ENCODE measurements at regions of chr12 and their contacts with region 1.

Region 1: GRCh38 chr12:53220801-53221202 is 11.2 kb downstream of the RARG start:
- DNase-seq: peak; percentile 92
- H3K4me3 Mint-ChIP-seq: peak overlapping the region; percentile 80
- H3K27ac Mint-ChIP-seq: peak overlapping the region; percentile 93
- H3K4me1 Mint-ChIP-seq: peaks cover 74% of the 10 kb centered on the region
- H3K27me3 Mint-ChIP-seq: no peaks in the 10 kb centered on the region

Region 2: GRCh38 chr12:53200458-53201176 is 20.2 kb before region 1 on chr12:
- CTCF ChIA-PET with region 1: interaction called, 3 read pairs
- POLR2A ChIA-PET with region 1: interaction called, 5 read pairs
- intact Hi-C with region 1: loop called (anchors 1 kb)
- DNase-seq: peak; percentile 77
- H3K4me3 Mint-ChIP-seq: peak overlapping the region; percentile 45
- H3K27ac Mint-ChIP-seq: peak overlapping the region; percentile 88
- H3K4me1 Mint-ChIP-seq: peaks cover 72% of the 10 kb centered on the region
- H3K27me3 Mint-ChIP-seq: no peaks in the 10 kb centered on the region

Region 3: DNA sequence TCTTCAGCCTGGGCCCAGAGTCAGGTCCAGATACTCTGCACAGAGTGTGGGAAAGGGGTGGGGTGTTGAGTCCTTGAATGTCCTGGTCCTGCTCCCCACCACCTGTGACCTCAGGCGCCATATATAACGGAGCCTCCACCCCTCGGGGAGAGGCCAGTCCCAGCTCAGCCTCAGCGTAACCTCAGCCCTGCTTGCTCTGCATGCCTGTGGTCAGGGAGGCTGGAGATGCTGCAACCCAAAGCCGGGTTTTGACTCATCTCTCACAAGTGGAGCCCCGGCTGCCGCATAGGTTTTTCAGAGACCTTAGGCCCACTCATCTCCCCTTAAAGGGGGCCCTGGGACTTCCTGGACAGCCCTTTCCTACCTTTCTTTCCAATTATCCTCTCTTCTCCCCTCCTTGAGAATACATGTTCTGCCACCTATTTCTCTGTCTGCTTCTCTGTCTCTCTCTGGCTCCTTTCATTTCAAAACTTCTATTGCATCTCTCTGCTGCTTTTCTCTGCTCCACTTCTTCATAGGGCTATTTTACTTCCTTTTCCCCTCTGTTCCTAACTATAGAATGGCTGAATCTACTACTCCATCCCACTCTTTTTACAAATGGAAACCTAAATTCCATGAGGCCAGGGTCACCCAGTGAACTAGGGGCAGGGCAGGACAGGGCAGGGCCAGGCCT is 14.9 kb before region 1 on chr12:
- CTCF ChIA-PET with region 1: interaction called, 11 read pairs
- POLR2A ChIA-PET with region 1: interaction called, 33 read pairs
- intact Hi-C with region 1: loop called (anchors 1 kb)
- DNase-seq: peak; percentile 92
- H3K4me3 Mint-ChIP-seq: peak overlapping the region; percentile 84
- H3K27ac Mint-ChIP-seq: peak overlapping the region; percentile 83
- H3K4me1 Mint-ChIP-seq: peaks cover 77% of the 10 kb centered on the region
- H3K27me3 Mint-ChIP-seq: no peaks in the 10 kb centered on the region

Region 4: GRCh38 chr12:53231826-53232645 is 11.2 kb after region 1 on chr12 and contains the start of gene RARG:
- CTCF ChIA-PET with region 1: interaction called, 6 read pairs
- POLR2A ChIA-PET with region 1: interaction called, 18 read pairs
- intact Hi-C with region 1: loop called (anchors 1 kb)
- DNase-seq: peak; percentile 81
- H3K4me3 Mint-ChIP-seq: peak within 1 kb of the TSS; percentile 86
- H3K27ac Mint-ChIP-seq: peak within 1 kb of the TSS; percentile 91
- H3K4me1 Mint-ChIP-seq: peaks cover 74% of the 10 kb centered on the region
- H3K27me3 Mint-ChIP-seq: no peaks in the 10 kb centered on the region
- total RNA-seq, gene RARG: 21.8 to 25.2 TPM

Region 5: DNA sequence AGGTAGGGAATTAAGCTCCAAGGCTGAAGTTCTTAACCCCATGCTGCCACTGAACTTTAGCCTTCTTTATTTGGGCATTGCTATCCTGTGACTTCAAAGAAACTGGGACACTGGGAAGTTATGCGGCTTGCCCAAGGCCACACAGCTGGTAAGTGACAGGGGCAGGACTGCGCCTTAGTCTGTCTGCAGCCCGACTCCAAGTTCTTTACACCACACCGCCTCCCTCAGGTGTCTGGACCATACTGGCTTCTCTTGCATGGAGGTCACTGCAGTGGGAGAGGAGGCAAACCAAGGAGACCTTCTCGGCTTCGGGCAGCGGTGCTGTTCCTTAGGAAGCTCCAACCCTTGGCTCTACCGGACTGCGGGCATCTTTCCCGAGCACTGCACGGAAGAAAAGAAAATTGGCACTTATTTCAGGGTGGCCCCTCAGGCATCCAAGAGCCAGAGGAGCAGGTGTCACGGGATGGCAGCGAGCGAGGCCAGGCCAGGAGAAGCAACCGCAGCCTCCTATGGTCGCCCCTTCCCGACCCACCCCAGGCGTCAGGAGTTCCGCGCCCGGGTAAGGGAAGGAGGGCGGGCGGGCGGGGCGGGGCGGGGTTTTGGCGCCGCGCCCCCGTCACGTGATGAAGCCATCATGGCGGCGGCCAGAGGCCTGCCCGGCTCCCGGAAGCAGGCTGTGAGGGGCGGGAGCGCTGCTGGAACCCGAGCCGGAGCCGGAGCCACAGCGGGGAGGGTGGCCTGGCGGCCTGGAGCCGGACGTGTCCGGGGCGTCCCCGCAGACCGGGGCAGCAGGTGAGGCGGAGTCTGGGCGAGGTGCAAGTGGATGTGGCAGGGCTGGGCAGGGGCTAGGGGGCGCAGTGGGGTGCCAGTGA is 30.9 kb after region 1 on chr12:
- CTCF ChIA-PET with region 1: interaction called, 164 read pairs
- POLR2A ChIA-PET with region 1: interaction called, 9 read pairs
- intact Hi-C with region 1: loop called (anchors 1 kb)
- DNase-seq: peak; percentile 79
- H3K4me3 Mint-ChIP-seq: peak overlapping the region; percentile 97
- H3K27ac Mint-ChIP-seq: peak overlapping the region; percentile 89
- H3K4me1 Mint-ChIP-seq: peaks cover 40% of the 10 kb centered on the region
- H3K27me3 Mint-ChIP-seq: no peaks in the 10 kb centered on the region

Region 6: GRCh38 chr12:53295070-53295890 is 74.5 kb after region 1 on chr12 and contains the start of gene PFDN5:
- CTCF ChIA-PET with region 1: interaction called, 172 read pairs
- POLR2A ChIA-PET with region 1: interaction called, 7 read pairs
- intact Hi-C with region 1: loop called (anchors 2 kb)
- DNase-seq: peak; percentile 92
- H3K4me3 Mint-ChIP-seq: peak within 1 kb of the TSS; percentile 99
- H3K27ac Mint-ChIP-seq: peak within 1 kb of the TSS; percentile 94
- H3K4me1 Mint-ChIP-seq: peaks cover 53% of the 10 kb centered on the region
- H3K27me3 Mint-ChIP-seq: no peaks in the 10 kb centered on the region
- total RNA-seq, gene PFDN5: 354 to 359 TPM

Region 7: GRCh38 chr12:53414756-53415417 is 194.1 kb after region 1 on chr12:
- CTCF ChIA-PET with region 1: no interaction called
- POLR2A ChIA-PET with region 1: no interaction called
- intact Hi-C with region 1: no loop called
- DNase-seq: no peak
- H3K4me3 Mint-ChIP-seq: no peak overlapping the region
- H3K27ac Mint-ChIP-seq: no peak overlapping the region
- H3K4me1 Mint-ChIP-seq: peaks cover 54% of the 10 kb centered on the region
- H3K27me3 Mint-ChIP-seq: no peaks in the 10 kb centered on the region

Region 8: GRCh38 chr12:54126696-54127537 is 906.1 kb after region 1 on chr12:
- CTCF ChIA-PET with region 1: no interaction called
- POLR2A ChIA-PET with region 1: no interaction called
- intact Hi-C with region 1: no loop called
- DNase-seq: peak; percentile 23
- H3K4me3 Mint-ChIP-seq: no peak overlapping the region
- H3K27ac Mint-ChIP-seq: no peak overlapping the region
- H3K4me1 Mint-ChIP-seq: peaks cover 9% of the 10 kb centered on the region
- H3K27me3 Mint-ChIP-seq: peaks cover 55% of the 10 kb centered on the region

Measured in activated CD4-positive, alpha-beta memory T cell treated with anti-CD3 and anti-CD28 coated beads for 36 hours (primary cell).